ENCODE measurements at regions of chr4 and their contacts with region 1.

Region 1: GRCh38 chr4:39977489-39978377 is at the start of gene PDS5A:
- DNase-seq: peak; percentile 93
- H3K4me3 ChIP-seq: peak within 1 kb of the TSS; percentile 84 to 97 (median 90)
- H3K27ac ChIP-seq: peak within 1 kb of the TSS; percentile 96 to 97 (median 97)
- H3K4me1 ChIP-seq: peaks cover 14 to 41% (median 31%) of the 10 kb centered on the region in 4 donors
- H3K27me3 ChIP-seq: no peaks in the 10 kb centered on the region
- CTCF ChIP-seq: peak; percentile 84 to 86 (median 85)
- EP300 ChIP-seq: no peak
- POLR2A ChIP-seq: no peak
- total RNA-seq, gene PDS5A: 48.2 to 56.1 (median 51.3) TPM

Region 2: GRCh38 chr4:39469429-39470077 is 508.2 kb before region 1 on chr4:
- intact Hi-C with region 1: loop called (anchors 2 kb)
- DNase-seq: no peak
- H3K4me3 ChIP-seq: no peak overlapping the region
- H3K27ac ChIP-seq: peak overlapping the region; percentile 39 to 69 (median 46)
- H3K4me1 ChIP-seq: peaks cover 0 to 10% (median 7%) of the 10 kb centered on the region in 4 donors
- H3K27me3 ChIP-seq: no peaks in the 10 kb centered on the region
- CTCF ChIP-seq: peak; percentile 77 to 81 (median 80)
- EP300 ChIP-seq: no peak
- POLR2A ChIP-seq: no peak

Measured in esophagus muscularis mucosa (tissue), 4 donors.